ENCODE measurements at regions of chr14 and their contacts with region 1.

Region 1: GRCh38 chr14:37150414-37150813 is 22.0 kb downstream of the SLC25A21 start:
- DNase-seq: peak in 1 of 2 experiments; percentile 48
- H3K4me3 ChIP-seq: no peak overlapping the region
- H3K4me3 Mint-ChIP-seq: no peak overlapping the region
- H3K27ac Mint-ChIP-seq: no peak overlapping the region
- H3K4me1 ChIP-seq: no peaks in the 10 kb centered on the region
- H3K4me1 Mint-ChIP-seq: peaks cover 6% of the 10 kb centered on the region
- H3K27me3 ChIP-seq: no peaks in the 10 kb centered on the region
- H3K27me3 Mint-ChIP-seq: no peaks in the 10 kb centered on the region
- CTCF ChIP-seq: peak; percentile 61 to 64

Region 2: GRCh38 chr14:36647824-36648753 is 502.3 kb before region 1 on chr14:
- CTCF ChIA-PET with region 1: interaction called, 12 read pairs
- POLR2A ChIA-PET with region 1: no interaction called
- intact Hi-C with region 1: loop called (anchors 1 kb)
- DNase-seq: peak; percentile 71 to 81
- H3K4me3 ChIP-seq: peak overlapping the region; percentile 59
- H3K4me3 Mint-ChIP-seq: peak overlapping the region; percentile 92
- H3K27ac Mint-ChIP-seq: peak overlapping the region; percentile 85
- H3K4me1 ChIP-seq: 0 out of 2 replicates have a peak, but pooled peaks cover 4% of the 10 kb centered on the region
- H3K4me1 Mint-ChIP-seq: peaks cover 6% of the 10 kb centered on the region
- H3K27me3 ChIP-seq: no peaks in the 10 kb centered on the region; the same call in 1 of the 2 replicates
- H3K27me3 Mint-ChIP-seq: no peaks in the 10 kb centered on the region
- CTCF ChIP-seq: peak; percentile 71 to 72

Region 3: DNA sequence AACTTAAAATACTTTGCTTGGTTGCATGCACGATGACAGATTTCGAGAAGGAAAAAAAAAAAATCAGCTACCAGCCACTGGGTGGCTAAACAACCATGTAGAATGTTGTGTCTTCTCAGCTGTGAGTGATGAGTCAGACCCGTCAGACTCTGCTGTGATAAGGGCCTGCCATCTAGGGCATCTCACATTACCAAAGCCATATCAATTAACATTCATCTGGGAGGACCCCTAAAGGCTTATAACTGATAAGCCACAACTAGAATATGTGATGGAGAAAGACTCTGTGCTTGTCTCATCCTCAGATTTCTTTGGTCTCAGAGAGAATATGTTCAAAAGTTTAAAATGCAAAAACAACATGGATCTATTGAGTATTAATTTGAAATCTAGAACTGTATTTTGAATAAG is 377.3 kb before region 1 on chr14:
- CTCF ChIA-PET with region 1: no interaction called
- POLR2A ChIA-PET with region 1: no interaction called
- intact Hi-C with region 1: loop called (anchors 1 kb)
- DNase-seq: peak; percentile 56 to 58
- H3K4me3 ChIP-seq: no peak overlapping the region
- H3K4me3 Mint-ChIP-seq: no peak overlapping the region
- H3K27ac Mint-ChIP-seq: peak overlapping the region; percentile 57
- H3K4me1 ChIP-seq: peaks cover 51% of the 10 kb centered on the region
- H3K4me1 Mint-ChIP-seq: peaks cover 29% of the 10 kb centered on the region
- H3K27me3 ChIP-seq: no peaks in the 10 kb centered on the region
- H3K27me3 Mint-ChIP-seq: no peaks in the 10 kb centered on the region
- CTCF ChIP-seq: peak; percentile 46 to 48

Region 4: DNA sequence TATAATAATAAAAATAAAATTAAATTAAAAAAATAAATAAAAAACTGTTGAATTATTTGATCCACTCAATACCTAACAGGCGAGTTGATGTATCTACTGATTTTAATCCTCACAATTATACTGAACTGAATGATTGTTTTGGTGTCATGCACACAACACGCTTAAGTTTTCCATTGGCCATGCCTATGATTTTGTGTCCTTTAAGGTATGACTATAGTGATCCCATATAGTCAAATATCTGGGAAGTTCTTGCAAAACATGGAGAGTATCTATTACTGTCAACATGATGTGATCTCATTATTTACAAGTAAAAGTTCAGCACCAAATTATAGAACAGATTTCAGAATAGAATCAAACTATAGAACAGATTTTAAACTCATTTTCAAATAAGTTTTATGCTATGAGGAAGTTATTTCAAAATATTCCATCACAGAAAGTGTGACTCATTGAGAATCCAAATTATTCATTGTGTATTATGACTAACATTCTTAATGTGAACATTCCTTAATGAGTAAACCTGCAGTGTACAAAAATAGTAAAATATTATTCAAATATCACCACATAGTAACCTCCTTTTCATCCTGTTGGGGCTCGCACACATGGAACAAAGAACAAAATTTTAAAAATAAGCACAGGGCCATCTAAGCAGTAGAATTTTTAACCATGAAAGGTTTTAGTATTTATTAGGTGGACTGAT is 168.4 kb before region 1 on chr14:
- CTCF ChIA-PET with region 1: no interaction called
- POLR2A ChIA-PET with region 1: no interaction called
- intact Hi-C with region 1: loop called (anchors 1 kb)
- DNase-seq: no peak
- H3K4me3 ChIP-seq: no peak overlapping the region
- H3K4me3 Mint-ChIP-seq: no peak overlapping the region
- H3K27ac Mint-ChIP-seq: no peak overlapping the region
- H3K4me1 ChIP-seq: peaks cover 39% of the 10 kb centered on the region
- H3K4me1 Mint-ChIP-seq: peaks cover 21% of the 10 kb centered on the region
- H3K27me3 ChIP-seq: no peaks in the 10 kb centered on the region
- H3K27me3 Mint-ChIP-seq: no peaks in the 10 kb centered on the region
- CTCF ChIP-seq: no peak

Region 5: DNA sequence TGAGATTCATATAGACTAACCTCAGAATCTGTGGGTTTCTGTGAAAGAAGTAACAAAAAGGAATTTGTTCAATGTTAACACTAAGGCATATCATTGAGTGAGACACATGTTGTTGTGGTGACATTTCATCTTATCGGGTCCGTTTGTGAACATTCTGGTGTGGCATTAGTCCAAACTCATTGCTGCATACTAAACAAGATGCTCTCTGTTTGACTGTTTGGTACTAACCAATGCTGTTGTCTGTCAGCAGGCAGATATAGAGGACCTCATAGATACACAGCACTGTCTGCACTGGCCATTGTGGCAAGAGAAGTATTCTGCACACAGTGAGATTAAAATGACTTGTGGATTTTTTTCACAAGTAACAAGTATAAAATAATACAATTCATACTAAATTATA is 19.2 kb before region 1 on chr14:
- CTCF ChIA-PET with region 1: no interaction called
- POLR2A ChIA-PET with region 1: no interaction called
- intact Hi-C with region 1: no loop called
- DNase-seq: no peak
- H3K4me3 ChIP-seq: no peak overlapping the region
- H3K4me3 Mint-ChIP-seq: no peak overlapping the region
- H3K27ac Mint-ChIP-seq: no peak overlapping the region
- H3K4me1 ChIP-seq: no peaks in the 10 kb centered on the region
- H3K4me1 Mint-ChIP-seq: peaks cover 8% of the 10 kb centered on the region
- H3K27me3 ChIP-seq: no peaks in the 10 kb centered on the region
- H3K27me3 Mint-ChIP-seq: no peaks in the 10 kb centered on the region
- CTCF ChIP-seq: no peak

Region 6: DNA sequence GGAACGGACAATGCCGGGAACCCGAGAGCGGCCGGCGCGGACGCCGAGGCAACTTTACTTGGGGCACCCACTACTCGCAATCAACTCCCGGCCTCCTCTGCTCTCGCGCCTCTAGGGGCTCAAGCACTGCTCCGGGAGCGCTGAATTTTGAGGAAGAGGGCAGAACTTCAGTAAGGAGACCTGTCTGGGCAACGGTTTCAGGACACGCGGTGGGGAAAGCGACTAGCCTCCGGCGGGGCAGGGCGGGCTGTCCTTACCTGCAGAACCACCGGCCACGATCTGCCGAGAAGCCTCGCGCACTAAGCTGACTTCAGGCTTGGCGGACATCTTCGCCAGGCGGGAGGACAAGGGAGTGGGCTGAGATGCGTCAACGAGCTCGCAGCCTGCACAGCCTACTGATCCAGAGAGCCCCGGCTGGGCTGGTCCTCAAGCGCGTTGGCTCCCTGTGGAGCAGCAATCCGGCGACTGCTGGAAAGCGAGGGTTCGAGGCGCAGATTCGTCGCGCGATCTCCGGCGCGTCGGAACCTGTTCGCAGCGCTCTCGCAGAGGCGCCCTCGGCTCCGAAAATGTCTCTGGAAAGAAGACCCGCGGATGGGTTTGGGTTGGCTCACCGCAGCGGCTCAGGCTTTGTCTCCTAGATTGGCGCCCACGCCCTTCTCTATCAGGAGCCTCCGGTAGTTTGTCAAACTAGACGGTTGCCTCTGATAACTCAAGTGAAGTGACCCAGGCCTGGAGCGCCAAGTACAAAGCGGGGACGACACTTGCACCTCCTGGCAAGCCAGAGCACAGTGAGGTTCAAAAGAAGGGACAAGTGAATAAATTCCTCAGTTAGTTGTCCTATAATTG is 21.8 kb after region 1 on chr14 and contains the start of gene SLC25A21:
- CTCF ChIA-PET with region 1: no interaction called
- POLR2A ChIA-PET with region 1: no interaction called
- intact Hi-C with region 1: no loop called
- DNase-seq: peak; percentile 83 to 85
- H3K4me3 ChIP-seq: peak within 1 kb of the TSS; percentile 86
- H3K4me3 Mint-ChIP-seq: peak within 1 kb of the TSS; percentile 90
- H3K27ac Mint-ChIP-seq: peak within 1 kb of the TSS; percentile 97
- H3K4me1 ChIP-seq: peaks cover 18% of the 10 kb centered on the region
- H3K4me1 Mint-ChIP-seq: peaks cover 7% of the 10 kb centered on the region
- H3K27me3 ChIP-seq: no peaks in the 10 kb centered on the region
- H3K27me3 Mint-ChIP-seq: no peaks in the 10 kb centered on the region
- CTCF ChIP-seq: peak in 1 of 2 experiments; percentile 34
- total RNA-seq, gene SLC25A21: 3.2 and 3.6 TPM in 2 replicates

Region 7: DNA sequence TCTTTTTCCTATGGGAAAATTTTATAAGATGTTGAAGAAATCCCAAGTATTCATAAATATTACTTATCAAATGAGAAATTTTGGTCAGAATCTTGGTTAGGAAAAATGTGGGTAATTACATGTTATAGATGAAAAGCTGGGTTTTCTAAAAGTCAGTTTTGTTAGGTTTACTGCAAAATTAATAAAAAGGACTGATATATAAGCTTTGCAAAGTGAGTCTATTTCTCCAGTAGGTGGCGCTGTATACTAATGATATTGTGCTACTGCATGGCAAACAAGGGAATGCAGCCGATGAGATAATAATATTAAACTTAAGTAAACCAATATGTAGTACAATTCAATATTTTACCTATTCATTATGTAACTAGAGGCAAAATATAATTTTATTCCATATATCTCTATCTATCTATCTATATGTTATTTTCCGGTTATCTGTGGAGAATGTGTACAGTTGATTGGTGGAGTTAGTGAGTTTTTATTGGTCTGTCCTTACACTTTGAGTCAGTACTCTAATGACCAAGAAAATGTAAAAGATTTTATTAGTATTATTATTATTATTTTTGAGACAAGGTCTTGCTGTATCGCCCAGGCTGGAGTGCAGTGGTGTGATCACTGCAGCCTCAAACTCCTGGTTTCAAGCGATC is 80.3 kb after region 1 on chr14:
- CTCF ChIA-PET with region 1: interaction called, 3 read pairs
- POLR2A ChIA-PET with region 1: no interaction called
- intact Hi-C with region 1: loop called (anchors 1 kb)
- DNase-seq: peak in 1 of 2 experiments; percentile 54
- H3K4me3 ChIP-seq: no peak overlapping the region
- H3K4me3 Mint-ChIP-seq: no peak overlapping the region
- H3K27ac Mint-ChIP-seq: no peak overlapping the region
- H3K4me1 ChIP-seq: 0 out of 2 replicates have a peak, but pooled peaks cover 7% of the 10 kb centered on the region
- H3K4me1 Mint-ChIP-seq: no peaks in the 10 kb centered on the region
- H3K27me3 ChIP-seq: no peaks in the 10 kb centered on the region
- H3K27me3 Mint-ChIP-seq: no peaks in the 10 kb centered on the region
- CTCF ChIP-seq: peak; percentile 57 to 84